ENCODE measurements at regions of chr7 and their contacts with region 1.

Region 1: DNA sequence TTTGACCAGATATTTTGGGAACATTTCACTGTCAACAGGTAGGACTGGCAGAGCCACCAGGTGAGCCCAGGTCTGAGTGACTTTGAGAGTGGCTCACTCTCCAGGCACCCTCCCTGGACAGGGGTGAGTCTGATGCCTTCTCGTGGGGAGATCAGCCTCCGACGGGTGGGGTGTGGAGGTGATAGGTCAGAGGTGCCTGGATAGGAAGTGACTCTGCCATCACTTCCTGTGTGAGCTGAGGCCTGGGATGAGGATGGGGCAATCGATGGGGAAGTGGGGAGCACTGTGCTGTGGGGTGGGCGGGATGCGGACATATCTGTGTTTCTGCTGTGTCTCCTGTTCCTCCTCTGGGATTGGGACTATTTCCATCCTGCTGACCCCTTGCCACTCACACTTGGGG is 34.6 kb downstream of the IFT22 start:
- DNase-seq: no peak
- H3K4me3 Mint-ChIP-seq: no peak overlapping the region
- H3K27ac Mint-ChIP-seq: no peak overlapping the region
- H3K4me1 Mint-ChIP-seq: peaks cover 10% of the 10 kb centered on the region
- H3K27me3 Mint-ChIP-seq: peaks cover 36% of the 10 kb centered on the region
- CTCF ChIP-seq: no peak

Region 2: DNA sequence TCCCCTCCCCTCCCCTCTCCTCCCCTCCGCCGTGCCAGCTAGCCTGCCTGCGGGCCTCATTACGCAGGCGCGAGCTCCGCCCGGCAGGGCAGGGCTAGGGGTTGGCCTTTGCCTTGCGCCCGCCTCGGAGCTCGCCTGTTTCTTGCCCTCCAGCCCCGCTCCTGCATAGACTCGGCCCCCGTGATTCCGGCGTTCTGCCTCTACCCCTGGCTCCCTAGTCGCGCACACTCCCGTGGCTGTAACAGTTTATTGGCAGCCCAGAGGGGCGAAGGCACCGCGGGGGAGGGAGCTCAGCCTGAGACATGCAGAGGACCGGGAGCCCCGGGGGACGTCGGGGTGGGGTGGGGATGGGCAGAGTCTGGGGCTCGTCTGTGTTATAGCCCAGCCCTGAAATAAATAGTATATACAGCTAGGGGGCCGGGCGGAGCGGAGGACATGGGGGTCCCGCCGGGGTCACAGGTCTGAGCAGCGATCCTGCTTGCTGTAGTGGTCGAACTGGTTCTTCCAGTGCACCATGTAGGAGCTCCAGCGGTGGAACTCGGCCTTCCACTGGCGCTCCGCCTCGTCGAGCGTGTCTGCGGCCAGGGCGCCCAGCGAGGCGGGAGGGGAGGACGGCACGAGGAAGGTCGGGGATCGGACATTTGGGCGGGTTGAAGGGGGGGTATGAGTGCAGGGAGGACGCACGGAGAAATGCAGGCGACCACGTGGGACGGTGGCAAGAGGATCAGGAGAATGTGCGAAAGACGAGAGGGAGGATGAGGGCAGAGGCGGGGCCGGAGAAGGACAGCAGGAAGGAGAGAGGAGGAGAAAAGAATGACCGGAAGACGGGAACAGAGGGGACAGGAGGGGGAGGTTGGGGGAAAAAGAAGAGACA is 397.0 kb before region 1 on chr7:
- CTCF ChIA-PET with region 1: interaction called, 4 read pairs
- POLR2A ChIA-PET with region 1: interaction called, 3 read pairs
- intact Hi-C with region 1: loop called (anchors 2 kb)
- DNase-seq: peak; percentile 92
- H3K4me3 Mint-ChIP-seq: peak overlapping the region; percentile 90
- H3K27ac Mint-ChIP-seq: peak overlapping the region; percentile 83
- H3K4me1 Mint-ChIP-seq: peaks cover 22% of the 10 kb centered on the region
- H3K27me3 Mint-ChIP-seq: no peaks in the 10 kb centered on the region
- CTCF ChIP-seq: no peak

Region 3: GRCh38 chr7:101217388-101218235 is 69.4 kb before region 1 on chr7 and contains the starts of genes PLOD3 and ZNHIT1:
- CTCF ChIA-PET with region 1: interaction called, 12 read pairs
- POLR2A ChIA-PET with region 1: interaction called, 4 read pairs
- intact Hi-C with region 1: no loop called
- DNase-seq: peak; percentile 99
- H3K4me3 Mint-ChIP-seq: peak within 1 kb of the TSS; percentile 99
- H3K27ac Mint-ChIP-seq: peak within 1 kb of the TSS; percentile 94
- H3K4me1 Mint-ChIP-seq: peaks cover 29% of the 10 kb centered on the region
- H3K27me3 Mint-ChIP-seq: no peaks in the 10 kb centered on the region
- CTCF ChIP-seq: no peak
- total RNA-seq, gene PLOD3: 125 and 134 TPM in 2 replicates
- total RNA-seq, gene ZNHIT1: 63.9 and 70.9 TPM in 2 replicates

Region 4: DNA sequence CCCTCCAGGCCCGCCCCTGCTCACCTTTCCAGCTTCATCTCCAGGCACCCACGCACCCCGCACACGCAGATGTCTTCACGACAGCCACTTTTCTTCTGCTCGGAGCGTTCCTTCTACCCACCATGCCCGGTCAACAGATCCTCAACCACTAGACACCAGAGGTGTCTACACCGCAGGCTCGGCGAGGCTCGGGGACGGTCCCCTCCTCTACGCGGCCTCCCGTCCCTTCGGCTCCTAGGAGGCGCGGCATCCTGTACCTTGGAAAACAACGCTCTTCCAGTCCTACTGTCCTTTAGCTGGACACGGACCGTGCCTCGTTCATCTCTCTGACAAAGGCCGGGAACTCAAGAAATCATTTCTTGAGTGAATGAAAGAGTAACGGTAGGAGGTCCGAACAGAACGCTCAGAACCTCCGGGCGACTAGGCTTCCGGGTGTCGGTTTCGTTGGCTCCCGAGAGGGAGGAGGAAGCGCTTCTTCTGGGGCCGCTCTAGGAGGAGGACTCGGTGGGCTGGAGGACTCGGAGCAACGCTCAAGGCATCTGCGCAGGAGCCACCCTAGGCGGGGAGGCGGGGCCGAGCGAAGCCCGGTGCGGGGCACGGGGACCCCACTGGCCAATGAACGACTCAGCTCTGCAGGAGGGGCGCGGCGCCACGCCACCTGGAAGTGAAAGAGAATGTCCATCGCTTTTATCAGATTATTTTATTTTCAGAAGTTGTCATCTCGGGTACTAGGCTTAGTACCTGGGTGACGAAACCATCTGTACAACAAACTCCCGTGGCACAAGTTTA is 35.0 kb before region 1 on chr7:
- CTCF ChIA-PET with region 1: interaction called, 16 read pairs
- POLR2A ChIA-PET with region 1: interaction called, 5 read pairs
- intact Hi-C with region 1: no loop called
- DNase-seq: peak; percentile 97
- H3K4me3 Mint-ChIP-seq: peak overlapping the region; percentile 90
- H3K27ac Mint-ChIP-seq: peak overlapping the region; percentile 92
- H3K4me1 Mint-ChIP-seq: peaks cover 11% of the 10 kb centered on the region
- H3K27me3 Mint-ChIP-seq: no peaks in the 10 kb centered on the region
- CTCF ChIP-seq: no peak

Region 5: DNA sequence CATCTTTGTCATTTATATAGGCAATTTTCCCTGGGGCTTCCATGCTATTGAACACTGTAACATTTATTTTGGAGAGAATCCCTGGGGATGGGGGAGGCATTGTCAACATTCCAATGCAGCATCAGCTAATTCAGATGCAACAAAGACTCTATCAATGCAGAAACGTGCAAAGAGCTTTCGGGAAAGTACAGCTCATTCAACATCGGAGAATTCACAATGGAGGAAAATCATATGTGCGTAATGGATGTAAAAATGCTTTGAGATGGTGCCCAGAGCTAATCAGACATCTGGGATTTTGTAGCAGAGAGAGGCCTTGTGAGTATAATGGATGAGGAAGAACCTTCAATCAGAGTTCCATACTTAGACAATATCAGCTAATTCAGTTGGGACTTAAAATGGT is 13.8 kb before region 1 on chr7:
- CTCF ChIA-PET with region 1: interaction called, 14 read pairs
- POLR2A ChIA-PET with region 1: no interaction called
- intact Hi-C with region 1: no loop called
- DNase-seq: no peak
- H3K4me3 Mint-ChIP-seq: no peak overlapping the region
- H3K27ac Mint-ChIP-seq: no peak overlapping the region
- H3K4me1 Mint-ChIP-seq: no peaks in the 10 kb centered on the region
- H3K27me3 Mint-ChIP-seq: peaks cover 26% of the 10 kb centered on the region
- CTCF ChIP-seq: no peak